ENCODE measurements at regions of chr17 and their contacts with region 1.

Region 1: GRCh38 chr17:57106107-57106835 is 21.2 kb downstream of the AKAP1 start:
- DNase-seq: peak in 2 of 5 donors; percentile 44 to 59
- ATAC-seq: peak in 3 of 4 donors; percentile 24 to 50 (median 35)
- H3K4me3 ChIP-seq: no peak overlapping the region
- H3K27ac ChIP-seq: peak overlapping the region in 9 of 12 donors; percentile 15 to 96 (median 88)
- H3K4me1 ChIP-seq: peaks cover 6 to 91% (median 57%) of the 10 kb centered on the region in 12 donors
- H3K27me3 ChIP-seq: no peaks in the 10 kb centered on the region
- CTCF ChIP-seq: peak; percentile 15 to 57 (median 41)
- POLR2A ChIP-seq: no peak

Region 2: DNA sequence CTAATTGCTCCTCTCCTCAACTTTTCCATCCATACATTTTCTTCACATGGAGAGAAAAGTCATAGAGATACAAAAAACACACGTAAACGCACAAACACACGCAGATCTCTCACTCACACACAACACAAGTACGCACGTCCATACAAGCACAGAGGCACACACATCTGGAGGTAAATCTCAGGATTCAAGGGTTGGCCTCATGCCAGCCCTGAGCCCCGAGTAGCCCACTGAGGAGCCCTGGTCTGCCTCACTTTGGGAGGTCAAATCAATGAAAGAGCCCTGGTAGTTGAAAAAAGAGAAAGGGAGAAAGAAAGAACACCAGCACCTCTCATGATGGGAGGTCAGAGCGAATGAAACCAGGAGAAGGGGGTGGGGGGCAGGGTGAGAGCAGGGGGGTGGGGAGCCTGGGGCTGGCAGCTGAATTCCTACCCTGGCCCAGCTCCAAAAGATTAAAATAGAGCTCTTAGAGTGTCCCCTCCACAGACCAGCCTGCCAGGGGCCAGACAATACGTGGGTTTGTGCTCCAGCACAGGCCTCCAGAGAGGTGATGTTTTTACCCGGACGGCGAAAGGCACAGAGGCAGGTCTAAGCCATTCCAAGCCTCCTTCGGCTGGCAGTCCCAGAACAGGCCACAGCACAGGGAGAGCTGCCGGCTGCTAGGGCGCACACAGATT is 585.0 kb before region 1 on chr17:
- intact Hi-C with region 1: no loop called
- DNase-seq: no peak
- ATAC-seq: peak in 1 of 4 donors; percentile 29
- H3K4me3 ChIP-seq: no peak overlapping the region
- H3K27ac ChIP-seq: no peak overlapping the region
- H3K4me1 ChIP-seq: peaks cover 0 to 5% (median 0%) of the 10 kb centered on the region in 12 donors
- H3K27me3 ChIP-seq: peaks cover 0 to 3% (median 0%) of the 10 kb centered on the region in 9 donors
- CTCF ChIP-seq: no peak
- POLR2A ChIP-seq: no peak

Region 3: GRCh38 chr17:57084802-57085447 is 21.3 kb before region 1 on chr17 and contains the start of gene AKAP1:
- intact Hi-C with region 1: loop called in 2 of 10 experiments (anchors 1 to 2 kb)
- DNase-seq: peak; percentile 96 to 99 (median 97)
- ATAC-seq: peak; percentile 89 to 95 (median 92)
- H3K4me3 ChIP-seq: peak within 1 kb of the TSS; percentile 63 to 98 (median 78)
- H3K27ac ChIP-seq: peak within 1 kb of the TSS; percentile 83 to 99 (median 95)
- H3K4me1 ChIP-seq: peaks cover 0 to 51% (median 27%) of the 10 kb centered on the region in 12 donors
- H3K27me3 ChIP-seq: no peaks in the 10 kb centered on the region
- CTCF ChIP-seq: peak in 11 of 12 donors; percentile 10 to 49 (median 30)
- POLR2A ChIP-seq: peak; percentile 31 to 95
- total RNA-seq, gene AKAP1: 77.4 to 240 (median 133) TPM